Dorsolateral prefrontal cortex (tissue), 120 donors: ENCODE measurements at regions of chr4 and their contacts with region 1.

Region 1: GRCh38 chr4:74311696-74312313 is 3.5 kb downstream of the EPGN start:
- DNase-seq: no peak
- H3K4me3 ChIP-seq: no peak overlapping the region
- H3K27ac ChIP-seq: no peak overlapping the region
- H3K27me3 ChIP-seq: no peaks in the 10 kb centered on the region
- CTCF ChIP-seq: peak; percentile 31 to 83 (median 66)

Region 2: GRCh38 chr4:74189331-74190043 is 122.3 kb before region 1 on chr4:
- intact Hi-C with region 1: loop called (anchors 5 kb)
- DNase-seq: no peak
- H3K4me3 ChIP-seq: no peak overlapping the region
- H3K27ac ChIP-seq: no peak overlapping the region
- H3K27me3 ChIP-seq: no peaks in the 10 kb centered on the region
- CTCF ChIP-seq: peak; percentile 49 to 82 (median 70)

Region 3: DNA sequence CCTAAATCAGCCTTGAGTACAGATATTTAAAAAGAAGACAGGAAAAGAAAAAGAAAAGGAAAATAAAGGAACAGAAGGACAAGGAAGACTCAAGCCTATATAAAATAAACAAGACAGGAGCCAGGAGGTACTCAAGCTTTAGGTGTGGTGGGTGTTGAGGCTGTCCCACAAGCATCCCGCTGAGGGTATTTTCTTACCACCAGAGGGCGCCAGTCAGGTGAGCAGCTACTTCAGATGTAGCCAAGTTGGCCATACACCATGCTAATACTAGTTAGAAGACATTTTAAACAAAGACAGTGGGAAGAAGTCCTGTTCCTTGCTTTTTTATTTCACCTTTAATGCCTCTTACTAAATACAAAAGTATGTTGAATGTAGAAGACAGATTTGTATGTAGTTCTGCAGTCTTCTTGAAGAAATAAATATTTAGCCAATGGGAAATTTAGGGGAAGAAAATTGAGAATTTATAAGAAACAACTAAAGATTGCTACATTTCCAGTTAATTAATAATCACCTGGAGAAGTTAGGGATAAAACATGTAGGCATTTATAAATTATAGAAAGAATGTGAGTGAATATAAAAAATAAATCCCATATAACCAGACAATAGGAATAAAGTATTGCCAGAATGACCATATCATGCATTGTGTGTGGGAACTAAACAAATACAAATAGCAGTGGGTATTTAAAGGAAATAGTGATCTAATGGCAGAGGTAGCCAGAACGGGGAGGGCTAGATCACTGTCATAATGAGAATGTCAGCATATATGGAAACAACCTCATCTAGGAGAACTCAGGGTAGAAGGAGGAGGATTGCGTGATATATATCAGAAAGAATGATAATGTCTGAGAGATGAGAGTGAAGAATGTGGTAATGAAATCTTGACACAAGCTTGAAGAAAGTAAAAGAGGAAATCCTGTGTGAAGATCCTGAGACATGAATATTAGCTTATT is 82.8 kb before region 1 on chr4:
- intact Hi-C with region 1: loop called in 1 of 2 experiments (anchors 5 kb)
- DNase-seq: peak in 6 of 10 donors; percentile 28 to 54 (median 51)
- H3K4me3 ChIP-seq: no peak overlapping the region
- H3K27ac ChIP-seq: no peak overlapping the region
- H3K27me3 ChIP-seq: no peaks in the 10 kb centered on the region
- CTCF ChIP-seq: peak; percentile 37 to 84 (median 75)